HEK293 (cell line): ENCODE measurements at regions of chr3 and their contacts with region 1.

Region 1: DNA sequence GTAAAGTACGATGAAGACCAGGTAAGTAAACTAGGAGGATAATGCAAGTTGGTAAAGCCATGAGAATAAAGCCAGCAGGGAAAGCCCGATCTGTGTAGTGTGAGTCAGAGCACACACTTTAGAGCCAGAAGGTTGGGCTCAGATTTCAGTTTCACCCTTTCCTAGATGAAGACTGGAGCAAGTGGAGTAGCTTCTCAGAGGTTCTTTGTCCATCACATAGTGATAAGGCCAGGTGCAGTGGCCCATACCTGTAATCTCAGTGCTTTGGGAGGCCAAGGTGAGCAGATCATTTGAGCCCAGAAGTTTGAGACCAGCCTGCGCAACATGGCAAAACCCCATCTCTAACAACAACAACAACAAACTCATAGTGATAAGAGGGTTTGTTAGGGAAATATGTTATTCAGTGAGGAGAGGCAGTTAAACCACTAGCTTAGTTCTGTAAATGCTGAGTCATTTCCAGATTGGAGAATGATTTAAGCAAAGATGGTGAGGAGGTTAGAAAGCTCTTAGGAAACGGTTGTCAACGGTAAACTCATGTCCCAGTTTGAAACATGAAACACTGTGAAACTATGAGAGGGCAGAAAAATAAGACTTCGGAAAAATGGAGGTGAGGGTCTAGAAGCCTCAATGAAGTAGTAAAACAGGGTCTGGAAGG is 39.0 kb downstream of the IL12A start:
- H3K4me3 ChIP-seq: no peak overlapping the region
- H3K27ac ChIP-seq: no peak overlapping the region
- H3K4me1 ChIP-seq: no peaks in the 10 kb centered on the region
- CTCF ChIP-seq: no peak

Region 2: DNA sequence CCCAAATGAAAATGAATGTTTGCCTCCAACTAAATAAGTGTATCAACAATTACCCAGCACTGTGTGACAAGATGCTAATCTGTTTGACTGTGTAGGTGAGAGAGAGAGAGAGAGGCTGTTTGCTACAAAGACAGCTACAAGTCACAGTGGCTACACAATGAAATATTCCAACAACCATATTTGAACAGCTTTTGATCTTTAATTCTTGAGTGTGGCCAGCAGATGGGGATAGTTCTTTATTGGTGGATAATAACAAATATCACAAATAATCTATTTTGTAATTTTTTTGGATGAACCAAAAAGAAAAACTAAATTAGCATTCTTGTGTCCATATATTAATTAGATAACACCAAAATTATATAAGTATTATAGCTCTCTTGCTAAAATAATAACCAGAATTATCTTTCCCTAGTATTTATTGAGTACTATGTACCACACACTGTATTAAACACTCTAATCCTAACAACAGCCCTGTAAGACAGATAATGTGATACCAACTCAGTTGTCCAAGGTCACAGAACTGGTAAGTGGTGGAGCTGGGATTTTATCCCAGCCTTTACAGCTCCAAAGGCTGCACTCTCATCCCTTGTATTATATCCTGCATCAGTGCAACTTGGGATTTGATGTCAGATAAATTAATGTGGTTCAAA is 135.7 kb after region 1 on chr3:
- CTCF ChIA-PET with region 1: interaction called, 11 read pairs
- POLR2A ChIA-PET with region 1: no interaction called
- H3K4me3 ChIP-seq: no peak overlapping the region
- H3K27ac ChIP-seq: no peak overlapping the region
- H3K4me1 ChIP-seq: no peaks in the 10 kb centered on the region
- CTCF ChIP-seq: no peak

Region 3: GRCh38 chr3:160296591-160296990 is 268.9 kb after region 1 on chr3:
- CTCF ChIA-PET with region 1: no interaction called
- POLR2A ChIA-PET with region 1: no interaction called
- H3K4me3 ChIP-seq: no peak overlapping the region
- H3K27ac ChIP-seq: no peak overlapping the region
- H3K4me1 ChIP-seq: no peaks in the 10 kb centered on the region
- CTCF ChIP-seq: no peak

Region 4: DNA sequence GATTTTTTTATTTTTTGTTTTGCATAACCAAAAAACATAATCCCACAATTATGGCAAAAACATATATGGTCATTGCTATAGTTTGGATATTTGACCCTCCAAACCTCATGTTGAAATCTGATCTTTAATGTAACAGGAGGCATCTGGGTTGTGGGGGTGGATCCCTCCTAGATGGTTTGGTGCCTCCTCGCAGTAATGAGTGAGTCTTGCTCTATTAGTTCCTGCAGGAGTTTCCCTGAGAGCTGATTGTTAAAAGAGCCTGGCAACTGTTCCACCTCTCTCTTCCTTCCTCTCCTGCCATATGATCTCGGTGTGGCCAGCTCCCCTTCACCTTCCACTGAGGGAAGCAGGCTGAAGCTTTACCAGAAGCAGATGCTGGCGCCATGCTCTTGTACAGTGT is 455.1 kb after region 1 on chr3:
- CTCF ChIA-PET with region 1: interaction called, 12 read pairs
- POLR2A ChIA-PET with region 1: no interaction called
- H3K4me3 ChIP-seq: no peak overlapping the region
- H3K27ac ChIP-seq: no peak overlapping the region
- H3K4me1 ChIP-seq: no peaks in the 10 kb centered on the region
- CTCF ChIP-seq: no peak